CD8-positive, alpha-beta memory T cell (primary cell): ENCODE measurements at regions of chr11 and their contacts with region 1.

Region 1: DNA sequence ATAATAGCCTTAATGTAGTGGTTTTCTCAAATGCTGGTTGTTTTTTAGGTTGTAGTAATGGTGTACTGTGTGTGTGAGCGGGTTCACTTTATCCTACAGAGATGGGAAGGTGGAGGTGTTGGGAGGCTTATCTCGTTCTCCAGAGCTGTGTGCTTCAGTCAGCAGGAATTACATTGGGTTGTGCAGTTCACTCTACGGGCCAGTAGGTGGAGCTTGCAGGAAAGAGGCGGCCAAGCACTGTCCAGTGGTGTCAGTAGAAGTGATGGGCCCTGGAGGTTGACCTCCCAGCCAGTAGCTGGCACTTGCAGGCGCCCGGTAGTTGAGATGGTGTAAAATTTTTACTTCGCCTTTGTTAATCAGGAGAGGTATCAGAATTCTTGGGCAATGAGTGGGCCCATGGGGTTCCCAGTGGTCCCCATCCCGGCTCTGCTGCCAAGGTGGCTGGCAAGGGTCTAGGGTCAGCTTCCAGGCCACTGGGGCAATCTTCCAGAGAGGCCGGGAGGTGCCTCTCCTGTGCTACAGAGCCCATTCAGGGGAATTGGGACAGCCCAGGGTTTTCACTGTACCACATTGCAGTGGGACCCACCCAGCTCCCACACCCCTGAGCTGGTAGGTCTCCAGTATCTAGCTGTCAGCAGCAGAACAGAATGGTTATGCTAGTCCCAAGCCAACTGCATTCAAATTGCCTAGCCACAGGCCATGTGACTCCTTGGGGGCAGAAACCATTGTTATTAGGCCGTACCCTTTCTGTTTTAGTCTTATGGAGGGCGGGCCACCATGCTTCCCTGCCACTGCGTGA is 43.9 kb downstream of the BIRC2 start:
- DNase-seq: peak; percentile 27 to 71 (median 44)
- H3K4me3 ChIP-seq: no peak overlapping the region
- H3K4me3 Mint-ChIP-seq: no peak overlapping the region
- H3K27ac ChIP-seq: no peak overlapping the region
- H3K27ac Mint-ChIP-seq: peak overlapping the region; percentile 15 to 86 (median 74)
- H3K4me1 ChIP-seq: peaks cover 20% of the 10 kb centered on the region
- H3K4me1 Mint-ChIP-seq: peaks cover 19 to 36% (median 34%) of the 10 kb centered on the region in 3 donors
- H3K27me3 ChIP-seq: no peaks in the 10 kb centered on the region
- H3K27me3 Mint-ChIP-seq: no peaks in the 10 kb centered on the region

Region 2: GRCh38 chr11:102244681-102245409 is 146.0 kb before region 1 on chr11:
- CTCF ChIA-PET with region 1: no interaction called
- POLR2A ChIA-PET with region 1: no interaction called
- DNase-seq: no peak
- H3K4me3 ChIP-seq: no peak overlapping the region
- H3K4me3 Mint-ChIP-seq: no peak overlapping the region
- H3K27ac ChIP-seq: no peak overlapping the region
- H3K27ac Mint-ChIP-seq: no peak overlapping the region
- H3K4me1 ChIP-seq: no peaks in the 10 kb centered on the region
- H3K4me1 Mint-ChIP-seq: no peaks in the 10 kb centered on the region
- H3K27me3 ChIP-seq: no peaks in the 10 kb centered on the region
- H3K27me3 Mint-ChIP-seq: peaks cover 7 to 14% of the 10 kb centered on the region in 2 donors

Region 3: DNA sequence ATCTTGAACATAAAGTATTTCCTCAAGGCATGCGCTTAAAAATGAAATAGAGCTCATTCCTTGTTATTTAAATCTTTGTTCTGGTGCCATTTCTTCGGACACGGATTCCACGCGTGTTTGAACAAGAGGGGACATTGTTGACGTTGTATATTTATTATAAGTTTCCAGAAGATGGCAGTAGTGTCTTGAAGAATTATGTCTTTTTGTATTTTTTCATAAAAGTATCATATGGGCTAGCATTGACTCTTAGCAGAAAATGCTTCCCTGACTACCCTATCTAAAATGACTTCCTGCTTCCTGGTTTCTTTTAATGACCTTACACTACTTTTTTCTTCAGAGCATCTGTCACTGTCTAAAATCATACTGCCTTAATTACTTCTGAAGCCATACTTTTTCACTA is 23.5 kb before region 1 on chr11:
- CTCF ChIA-PET with region 1: interaction called, 10 read pairs
- POLR2A ChIA-PET with region 1: no interaction called
- DNase-seq: peak in 2 of 5 donors; percentile 38 to 52
- H3K4me3 ChIP-seq: no peak overlapping the region
- H3K4me3 Mint-ChIP-seq: no peak overlapping the region
- H3K27ac ChIP-seq: no peak overlapping the region
- H3K27ac Mint-ChIP-seq: peak overlapping the region in 7 of 8 donors; percentile 31 to 79 (median 64)
- H3K4me1 ChIP-seq: peaks cover 17% of the 10 kb centered on the region
- H3K4me1 Mint-ChIP-seq: peaks cover 27 to 34% (median 30%) of the 10 kb centered on the region in 3 donors
- H3K27me3 ChIP-seq: no peaks in the 10 kb centered on the region
- H3K27me3 Mint-ChIP-seq: no peaks in the 10 kb centered on the region

Region 4: GRCh38 chr11:102410382-102410784 is 19.5 kb after region 1 on chr11:
- CTCF ChIA-PET with region 1: interaction called, 13 read pairs
- POLR2A ChIA-PET with region 1: interaction called, 4 read pairs
- DNase-seq: no peak
- H3K4me3 ChIP-seq: no peak overlapping the region
- H3K4me3 Mint-ChIP-seq: no peak overlapping the region
- H3K27ac ChIP-seq: no peak overlapping the region
- H3K27ac Mint-ChIP-seq: peak overlapping the region; percentile 10 to 73 (median 46)
- H3K4me1 ChIP-seq: peaks cover 73% of the 10 kb centered on the region
- H3K4me1 Mint-ChIP-seq: peaks cover 74 to 95% (median 94%) of the 10 kb centered on the region in 3 donors
- H3K27me3 ChIP-seq: no peaks in the 10 kb centered on the region
- H3K27me3 Mint-ChIP-seq: peaks cover 0 to 3% of the 10 kb centered on the region in 2 donors

Region 5: DNA sequence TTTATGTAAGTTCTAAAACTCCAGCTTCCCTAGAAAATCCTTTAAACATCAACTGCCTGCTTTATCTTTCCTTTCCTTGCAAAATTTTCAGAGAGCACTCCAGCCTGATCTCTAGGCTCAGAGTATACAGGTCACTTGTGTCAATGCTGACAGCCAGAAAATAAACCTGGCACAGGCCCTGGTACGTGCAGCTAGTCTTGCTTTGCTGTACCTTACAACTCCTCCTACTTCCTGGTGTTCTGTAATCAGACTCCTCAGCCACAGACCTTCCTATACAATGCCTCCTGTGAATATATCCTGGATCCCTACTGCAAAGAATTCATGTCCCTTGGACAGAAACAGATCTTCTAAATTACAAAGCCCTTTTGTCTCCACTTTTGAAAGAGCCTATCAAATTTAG is 85.9 kb after region 1 on chr11:
- CTCF ChIA-PET with region 1: interaction called, 10 read pairs
- POLR2A ChIA-PET with region 1: interaction called, 3 read pairs
- DNase-seq: peak in 1 of 5 donors; percentile 27
- H3K4me3 ChIP-seq: no peak overlapping the region
- H3K4me3 Mint-ChIP-seq: peak overlapping the region in 3 of 7 donors; percentile 30 to 59 (median 33)
- H3K27ac ChIP-seq: peak overlapping the region; percentile 59
- H3K27ac Mint-ChIP-seq: peak overlapping the region; percentile 5 to 91 (median 82)
- H3K4me1 ChIP-seq: peaks cover 34% of the 10 kb centered on the region
- H3K4me1 Mint-ChIP-seq: peaks cover 18 to 46% (median 33%) of the 10 kb centered on the region in 3 donors
- H3K27me3 ChIP-seq: no peaks in the 10 kb centered on the region
- H3K27me3 Mint-ChIP-seq: no peaks in the 10 kb centered on the region